ENCODE measurements at regions of chr12 and their contacts with region 1.

Region 1: DNA sequence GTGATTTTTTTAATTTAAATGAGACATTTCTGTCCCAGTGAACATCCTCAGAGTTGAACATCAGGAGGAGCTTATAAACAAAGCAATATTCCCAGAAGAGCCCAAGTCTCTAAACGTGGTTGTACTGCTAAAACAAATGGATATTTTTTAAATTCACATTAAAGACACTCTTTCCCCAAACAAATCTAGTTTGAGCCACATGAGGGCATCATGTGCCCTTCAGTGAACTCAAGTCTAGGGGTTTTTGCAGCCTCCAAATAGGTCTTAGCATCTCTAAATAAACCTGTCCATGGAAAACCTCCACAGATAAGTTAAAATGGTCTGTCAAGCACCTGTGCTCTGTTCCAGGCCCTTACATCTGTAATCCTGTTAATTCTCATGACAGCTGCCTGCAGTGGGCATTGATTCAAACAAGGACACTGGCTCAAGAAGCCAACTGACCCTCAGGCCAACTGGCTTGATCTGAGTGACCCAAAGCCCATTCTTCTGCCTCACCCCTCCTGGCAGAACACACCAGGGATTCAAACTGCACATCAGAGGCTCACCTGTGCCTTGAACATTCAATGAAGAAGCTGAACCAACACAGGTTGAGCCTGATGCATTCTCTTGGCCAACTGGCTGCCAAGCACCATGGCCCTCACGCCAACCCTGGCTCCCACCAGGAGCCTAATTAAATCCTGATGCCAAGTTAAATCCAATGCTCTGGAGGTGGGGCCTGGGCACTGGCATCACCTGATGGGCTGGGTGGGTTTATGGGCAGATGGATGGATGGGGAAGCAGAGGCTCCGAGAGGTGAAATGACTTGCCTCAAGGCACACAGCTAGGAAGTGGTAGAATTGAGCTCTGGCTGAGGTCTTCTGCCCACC is 8.6 kb downstream of the ISCU start:
- DNase-seq: no peak
- H3K4me3 ChIP-seq: no peak overlapping the region
- H3K27ac ChIP-seq: no peak overlapping the region
- H3K4me1 ChIP-seq: peaks cover 3 to 45% (median 10%) of the 10 kb centered on the region in 4 donors
- H3K27me3 ChIP-seq: no peaks in the 10 kb centered on the region
- CTCF ChIP-seq: no peak
- EP300 ChIP-seq: no peak
- POLR2A ChIP-seq: no peak

Region 2: GRCh38 chr12:108611884-108612415 is 41.0 kb after region 1 on chr12:
- in situ Hi-C with region 1: loop called (anchors 5 to 10 kb)
- intact Hi-C with region 1: no loop called
- DNase-seq: no peak
- H3K4me3 ChIP-seq: no peak overlapping the region
- H3K27ac ChIP-seq: no peak overlapping the region
- H3K4me1 ChIP-seq: peaks cover 0 to 9% (median 0%) of the 10 kb centered on the region in 4 donors
- H3K27me3 ChIP-seq: no peaks in the 10 kb centered on the region
- CTCF ChIP-seq: peak; percentile 22 to 33 (median 32)
- EP300 ChIP-seq: no peak
- POLR2A ChIP-seq: no peak

Region 3: DNA sequence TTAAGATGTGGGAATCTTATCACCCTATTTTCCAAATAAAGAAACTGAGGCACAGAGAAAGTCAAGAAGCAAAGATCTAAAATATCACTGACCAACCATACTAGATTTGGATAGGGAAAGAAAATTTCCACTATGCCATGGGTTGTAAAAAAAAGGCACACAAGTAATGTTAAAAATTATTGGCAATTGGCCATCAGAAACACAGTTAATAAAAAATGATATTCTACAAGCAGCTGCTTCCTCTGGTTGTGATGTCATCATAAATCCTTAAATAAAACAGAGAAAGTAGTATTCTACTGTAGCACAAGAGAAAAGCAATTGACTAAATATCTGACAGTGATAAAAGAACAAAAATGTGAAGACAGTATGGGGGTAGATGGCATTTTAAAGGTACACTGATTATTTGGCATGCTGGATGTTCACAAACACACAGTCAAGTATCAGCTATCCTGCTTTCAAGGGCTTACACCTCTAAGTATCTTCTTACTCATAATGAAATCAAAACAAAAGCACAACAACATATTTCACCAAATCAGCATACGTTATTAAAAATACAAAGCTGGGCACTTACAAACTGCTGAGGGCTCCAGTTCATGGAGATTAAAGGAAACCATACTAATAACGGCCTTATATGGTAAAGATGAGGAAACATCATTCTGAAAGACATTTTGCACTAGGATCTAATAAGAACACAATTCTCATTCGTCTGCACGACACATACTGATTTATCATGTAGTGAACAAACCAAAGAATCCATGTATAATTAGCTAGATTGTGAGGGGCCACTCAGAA is 114.7 kb after region 1 on chr12:
- in situ Hi-C with region 1: no loop called
- intact Hi-C with region 1: no loop called
- DNase-seq: no peak
- H3K4me3 ChIP-seq: no peak overlapping the region
- H3K27ac ChIP-seq: peak overlapping the region; percentile 84 to 94 (median 88)
- H3K4me1 ChIP-seq: peaks cover 4 to 60% (median 45%) of the 10 kb centered on the region in 4 donors
- H3K27me3 ChIP-seq: no peaks in the 10 kb centered on the region
- CTCF ChIP-seq: no peak
- EP300 ChIP-seq: no peak
- POLR2A ChIP-seq: no peak

Measured in transverse colon (tissue), 4 donors.